ENCODE measurements at regions of chrX and their contacts with region 1.

Region 1: GRCh38 chrX:135112096-135112729 is 8.1 kb downstream of the ETDB start:
- DNase-seq: peak; percentile 54
- H3K4me3 ChIP-seq: no peak overlapping the region
- H3K27ac ChIP-seq: no peak overlapping the region
- H3K4me1 ChIP-seq: no peaks in the 10 kb centered on the region
- H3K27me3 ChIP-seq: no peaks in the 10 kb centered on the region
- CTCF ChIP-seq: peak; percentile 79

Region 2: DNA sequence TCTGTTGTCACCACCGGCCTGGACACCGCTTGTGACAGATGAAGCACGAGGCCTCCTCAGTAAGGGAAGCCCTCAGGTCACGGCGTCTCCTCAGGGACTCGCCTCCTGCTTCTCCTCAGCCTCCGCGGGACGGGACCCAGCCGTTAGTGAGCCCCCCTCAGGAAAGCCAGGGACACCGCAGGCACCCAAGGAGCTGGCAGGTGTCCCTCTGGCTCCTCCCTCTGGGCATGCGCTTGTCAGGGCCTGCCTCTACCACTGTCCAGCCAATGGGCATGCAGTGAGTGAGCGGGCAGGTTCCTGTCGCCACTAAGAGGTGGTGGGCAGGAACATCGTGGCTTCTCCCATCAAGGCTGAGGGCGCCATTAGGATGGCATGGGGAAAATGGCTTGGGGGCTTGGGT is 82.5 kb after region 1 on chrX:
- CTCF ChIA-PET with region 1: no interaction called
- POLR2A ChIA-PET with region 1: no interaction called
- intact Hi-C with region 1: loop called (anchors 5 kb)
- DNase-seq: peak; percentile 12
- H3K4me3 ChIP-seq: no peak overlapping the region
- H3K27ac ChIP-seq: no peak overlapping the region
- H3K4me1 ChIP-seq: no peaks in the 10 kb centered on the region
- H3K27me3 ChIP-seq: peaks cover 3% of the 10 kb centered on the region
- CTCF ChIP-seq: 0 out of 2 replicates have a peak, but pooled peaks have one; percentile 10